ENCODE measurements at regions of chr15 and their contacts with region 1.

Region 1: GRCh38 chr15:38453971-38454695 is at the start of gene FAM98B:
- DNase-seq: peak; percentile 84
- H3K4me3 Mint-ChIP-seq: peak within 1 kb of the TSS; percentile 87
- H3K27ac Mint-ChIP-seq: peak within 1 kb of the TSS; percentile 91
- H3K4me1 Mint-ChIP-seq: peaks cover 19% of the 10 kb centered on the region
- H3K27me3 Mint-ChIP-seq: peaks cover 24% of the 10 kb centered on the region
- total RNA-seq, gene FAM98B: 53.9 and 56.5 TPM in 2 replicates

Region 2: GRCh38 chr15:38378161-38378560 is 76.0 kb before region 1 on chr15:
- intact Hi-C with region 1: no loop called
- DNase-seq: no peak
- H3K4me3 Mint-ChIP-seq: no peak overlapping the region
- H3K27ac Mint-ChIP-seq: no peak overlapping the region
- H3K4me1 Mint-ChIP-seq: no peaks in the 10 kb centered on the region
- H3K27me3 Mint-ChIP-seq: peaks cover 15% of the 10 kb centered on the region

Region 3: DNA sequence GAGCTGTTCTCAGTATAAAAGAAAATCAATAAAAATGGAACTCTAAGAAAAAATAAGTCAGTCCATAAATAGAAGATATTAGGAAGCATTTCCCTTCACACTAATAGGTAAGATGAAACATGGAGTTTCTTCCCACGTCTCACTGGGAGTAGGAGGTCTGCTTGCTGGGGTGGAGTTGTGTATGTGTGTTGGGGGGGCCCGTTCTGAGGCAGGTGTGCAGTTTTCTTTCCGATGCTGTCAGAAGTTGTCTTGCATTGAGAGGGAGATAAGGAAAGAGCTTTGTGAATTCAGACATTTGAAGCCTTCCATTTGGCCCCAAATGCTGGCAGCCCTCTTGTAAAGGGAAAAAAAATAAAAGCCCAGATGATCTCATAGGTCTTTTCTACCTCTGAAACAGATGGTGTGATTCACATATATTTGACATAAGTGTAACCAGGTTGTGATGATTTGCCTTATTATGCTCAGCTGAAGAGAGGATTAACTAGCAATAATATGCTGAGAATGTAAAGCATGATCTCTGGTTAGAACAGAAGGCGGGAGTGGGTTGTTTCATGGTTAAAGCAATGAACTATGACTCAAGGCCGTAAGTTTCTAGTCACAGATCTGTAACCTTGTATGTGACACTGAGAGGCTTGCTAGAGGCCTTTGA is 101.7 kb after region 1 on chr15:
- intact Hi-C with region 1: loop called (anchors 2 kb)
- DNase-seq: no peak
- H3K4me3 Mint-ChIP-seq: peak overlapping the region; percentile 66
- H3K27ac Mint-ChIP-seq: peak overlapping the region; percentile 98
- H3K4me1 Mint-ChIP-seq: peaks cover 95% of the 10 kb centered on the region
- H3K27me3 Mint-ChIP-seq: no peaks in the 10 kb centered on the region